PC-3 (cell line): ENCODE measurements at regions of chr1 and their contacts with region 1.

Region 1: GRCh38 chr1:23496490-23497181 is 12.7 kb upstream of the ASAP3 start:
- DNase-seq: no peak
- ATAC-seq: peak; percentile 35
- H3K4me3 ChIP-seq: no peak overlapping the region
- H3K27ac ChIP-seq: no peak overlapping the region
- H3K4me1 ChIP-seq: no peaks in the 10 kb centered on the region
- H3K27me3 ChIP-seq: no peaks in the 10 kb centered on the region
- CTCF ChIP-seq: no peak

Region 2: DNA sequence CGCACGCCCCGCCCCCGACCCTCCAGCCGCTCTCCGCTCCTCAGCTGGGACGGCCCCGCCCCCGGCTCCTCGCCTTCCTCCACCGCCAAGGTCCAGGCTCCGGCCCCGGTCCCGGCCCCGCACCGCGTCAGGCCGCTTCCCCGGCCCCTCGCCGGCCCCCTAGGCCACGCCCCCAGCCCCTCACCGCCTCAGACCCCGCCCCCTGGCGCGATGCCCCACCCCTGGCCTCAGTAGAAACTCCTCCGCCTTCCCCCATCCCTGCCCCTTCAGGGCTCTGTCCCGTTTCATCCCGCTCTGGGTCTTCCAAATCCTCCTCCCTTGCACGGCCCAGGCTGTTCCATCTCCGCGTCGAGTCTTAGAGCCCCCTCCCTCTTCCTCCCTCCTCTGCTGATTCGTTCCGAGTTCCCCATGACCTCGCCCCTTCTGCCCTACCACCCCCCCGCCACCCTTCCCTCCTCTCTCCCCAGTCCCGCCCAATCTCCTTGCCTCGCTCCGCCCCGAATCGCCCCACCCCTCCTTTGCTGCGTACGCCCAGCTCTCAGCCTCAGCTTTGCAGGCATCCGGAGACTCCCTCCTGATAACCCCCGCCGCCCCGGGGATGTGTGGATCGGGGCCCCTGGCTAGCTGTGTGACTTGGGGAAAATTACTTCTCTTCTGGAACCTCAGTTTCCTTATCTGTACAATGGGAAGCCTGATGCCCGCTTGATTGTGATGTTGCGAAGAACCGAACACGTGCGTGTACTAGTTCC is 12.2 kb before region 1 on chr1:
- CTCF ChIA-PET with region 1: interaction called, 18 read pairs
- POLR2A ChIA-PET with region 1: no interaction called
- intact Hi-C with region 1: no loop called
- DNase-seq: peak; percentile 82
- ATAC-seq: peak; percentile 91
- H3K4me3 ChIP-seq: peak overlapping the region; percentile 76
- H3K27ac ChIP-seq: no peak overlapping the region
- H3K4me1 ChIP-seq: peaks cover 12% of the 10 kb centered on the region
- H3K27me3 ChIP-seq: no peaks in the 10 kb centered on the region
- CTCF ChIP-seq: no peak

Region 3: DNA sequence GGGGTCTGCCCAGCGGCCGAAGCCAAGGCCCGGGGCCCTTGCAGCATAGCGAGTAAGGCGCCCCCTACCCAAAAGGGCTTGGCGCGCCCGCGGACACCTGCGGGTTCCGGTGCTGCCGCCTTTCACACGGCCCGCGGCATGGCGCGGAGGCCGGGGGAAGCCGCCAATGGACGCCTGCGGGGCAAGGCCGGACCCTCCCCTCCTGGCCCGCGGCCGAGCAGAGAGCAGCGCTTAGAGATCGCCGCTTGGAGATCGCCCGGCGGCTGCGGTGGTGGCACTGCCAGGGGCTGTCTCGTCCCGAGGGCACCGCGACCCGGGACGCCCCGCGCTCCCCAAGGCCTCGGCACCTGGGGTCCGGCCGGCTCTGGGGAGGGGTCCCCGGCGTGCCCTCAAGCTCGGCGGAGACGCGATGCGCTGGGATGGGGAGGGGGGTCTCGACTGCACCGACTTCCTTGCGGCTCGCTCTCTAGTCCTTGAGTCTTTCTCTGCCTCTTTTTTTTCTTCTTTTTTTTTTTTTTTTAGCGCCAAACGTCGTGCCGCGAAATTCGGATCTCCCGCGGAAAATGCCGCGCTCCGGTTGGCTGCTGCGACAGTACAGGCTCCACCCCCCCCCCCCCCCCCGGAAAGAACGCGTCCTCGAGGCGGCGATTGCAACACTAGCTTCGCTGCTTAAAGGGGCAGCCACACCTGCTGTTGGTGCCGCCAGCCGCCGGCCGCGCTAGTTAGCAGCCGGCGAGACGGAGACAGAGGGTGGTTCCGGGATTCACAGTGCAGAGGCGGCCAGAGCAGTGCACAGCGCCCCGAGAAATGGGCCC is 34.3 kb after region 1 on chr1 and contains the start of gene E2F2:
- CTCF ChIA-PET with region 1: interaction called, 13 read pairs
- POLR2A ChIA-PET with region 1: no interaction called
- intact Hi-C with region 1: no loop called
- DNase-seq: peak; percentile 81
- ATAC-seq: peak; percentile 68
- H3K4me3 ChIP-seq: peak within 1 kb of the TSS; percentile 71
- H3K27ac ChIP-seq: peak within 1 kb of the TSS; percentile 29; the same call in 1 of the 2 replicates
- H3K4me1 ChIP-seq: peaks cover 48% of the 10 kb centered on the region
- H3K27me3 ChIP-seq: no peaks in the 10 kb centered on the region
- CTCF ChIP-seq: peak; percentile 30; the same call in 1 of the 2 replicates
- total RNA-seq, gene E2F2: 7.0 and 8.3 TPM in 2 replicates

Region 4: GRCh38 chr1:23539698-23540266 is 43.1 kb after region 1 on chr1:
- CTCF ChIA-PET with region 1: interaction called, 53 read pairs
- POLR2A ChIA-PET with region 1: interaction called, 9 read pairs
- intact Hi-C with region 1: no loop called
- DNase-seq: peak; percentile 96
- ATAC-seq: peak; percentile 94
- H3K4me3 ChIP-seq: peak overlapping the region; percentile 49; the same call in 1 of the 2 replicates
- H3K27ac ChIP-seq: no peak overlapping the region
- H3K4me1 ChIP-seq: no peaks in the 10 kb centered on the region
- H3K27me3 ChIP-seq: no peaks in the 10 kb centered on the region
- CTCF ChIP-seq: peak; percentile 94

Region 5: GRCh38 chr1:23601071-23601967 is 104.7 kb after region 1 on chr1:
- CTCF ChIA-PET with region 1: no interaction called
- POLR2A ChIA-PET with region 1: interaction called, 10 read pairs
- intact Hi-C with region 1: no loop called
- DNase-seq: no peak
- ATAC-seq: no peak
- H3K4me3 ChIP-seq: no peak overlapping the region
- H3K27ac ChIP-seq: no peak overlapping the region
- H3K4me1 ChIP-seq: no peaks in the 10 kb centered on the region
- H3K27me3 ChIP-seq: no peaks in the 10 kb centered on the region
- CTCF ChIP-seq: no peak

Region 6: GRCh38 chr1:23634842-23635651 is 138.4 kb after region 1 on chr1:
- CTCF ChIA-PET with region 1: interaction called, 8 read pairs
- POLR2A ChIA-PET with region 1: no interaction called
- intact Hi-C with region 1: loop called (anchors 2 kb)
- DNase-seq: peak; percentile 76
- ATAC-seq: peak; percentile 72
- H3K4me3 ChIP-seq: peak overlapping the region; percentile 73
- H3K27ac ChIP-seq: no peak overlapping the region
- H3K4me1 ChIP-seq: 0 out of 2 replicates have a peak, but pooled peaks cover 4% of the 10 kb centered on the region
- H3K27me3 ChIP-seq: no peaks in the 10 kb centered on the region
- CTCF ChIP-seq: peak; percentile 82

Region 7: DNA sequence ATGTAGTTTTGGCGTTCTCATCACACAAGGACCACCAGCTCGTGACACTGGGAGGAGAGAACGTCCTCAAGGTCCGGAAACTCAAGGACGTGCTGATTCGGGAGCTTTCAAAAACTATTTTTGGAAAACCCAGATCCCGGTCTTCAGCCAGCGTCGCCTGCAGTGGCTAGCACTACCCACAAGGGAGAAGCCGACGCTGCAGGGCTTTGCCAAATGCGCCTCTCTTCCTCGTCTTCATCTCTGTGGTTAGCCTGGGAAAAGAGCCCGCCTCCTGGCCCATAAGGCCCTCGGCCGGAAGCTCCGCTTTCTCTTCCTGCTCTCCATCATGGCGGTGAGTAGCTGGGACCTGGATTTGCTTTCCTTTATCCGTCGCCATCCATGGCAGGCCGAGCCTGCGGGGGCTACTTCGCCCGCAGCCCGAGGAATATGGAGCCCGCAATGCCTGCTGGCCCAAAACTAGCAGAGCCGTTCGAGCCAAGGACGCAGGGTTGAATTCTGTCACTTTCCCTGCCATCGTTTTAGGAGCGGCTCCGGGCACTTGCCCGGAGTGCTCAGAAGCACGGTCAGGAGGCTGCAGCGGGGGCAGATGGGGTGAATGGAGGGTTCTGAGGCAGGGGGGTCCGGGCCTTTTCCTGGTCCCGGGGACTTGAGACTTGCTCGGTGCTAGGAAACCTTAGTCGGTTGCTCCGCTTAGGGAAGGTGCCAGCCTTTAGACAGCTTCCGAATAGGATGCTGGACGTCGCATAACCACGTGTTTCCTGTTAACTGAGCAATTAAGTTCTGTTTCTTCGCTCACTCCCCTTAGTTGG is 195.1 kb after region 1 on chr1 and contains the start of gene RPL11:
- CTCF ChIA-PET with region 1: no interaction called
- POLR2A ChIA-PET with region 1: interaction called, 12 read pairs
- intact Hi-C with region 1: no loop called
- DNase-seq: peak; percentile 97
- ATAC-seq: peak; percentile 99
- H3K4me3 ChIP-seq: peak within 1 kb of the TSS; percentile 95
- H3K27ac ChIP-seq: peak within 1 kb of the TSS; percentile 47
- H3K4me1 ChIP-seq: peaks cover 21% of the 10 kb centered on the region
- H3K27me3 ChIP-seq: no peaks in the 10 kb centered on the region
- CTCF ChIP-seq: peak; percentile 66
- total RNA-seq, gene RPL11: 1,031 and 1,441 TPM in 2 replicates

Region 8: GRCh38 chr1:23718482-23718881 is 221.8 kb after region 1 on chr1:
- CTCF ChIA-PET with region 1: no interaction called
- POLR2A ChIA-PET with region 1: no interaction called
- intact Hi-C with region 1: no loop called
- DNase-seq: peak; percentile 45
- ATAC-seq: peak; percentile 76
- H3K4me3 ChIP-seq: no peak overlapping the region
- H3K27ac ChIP-seq: no peak overlapping the region
- H3K4me1 ChIP-seq: no peaks in the 10 kb centered on the region
- H3K27me3 ChIP-seq: no peaks in the 10 kb centered on the region
- CTCF ChIP-seq: peak; percentile 67